RWPE1 (cell line): ENCODE measurements at regions of chr21 and their contacts with region 1.

Region 1: DNA sequence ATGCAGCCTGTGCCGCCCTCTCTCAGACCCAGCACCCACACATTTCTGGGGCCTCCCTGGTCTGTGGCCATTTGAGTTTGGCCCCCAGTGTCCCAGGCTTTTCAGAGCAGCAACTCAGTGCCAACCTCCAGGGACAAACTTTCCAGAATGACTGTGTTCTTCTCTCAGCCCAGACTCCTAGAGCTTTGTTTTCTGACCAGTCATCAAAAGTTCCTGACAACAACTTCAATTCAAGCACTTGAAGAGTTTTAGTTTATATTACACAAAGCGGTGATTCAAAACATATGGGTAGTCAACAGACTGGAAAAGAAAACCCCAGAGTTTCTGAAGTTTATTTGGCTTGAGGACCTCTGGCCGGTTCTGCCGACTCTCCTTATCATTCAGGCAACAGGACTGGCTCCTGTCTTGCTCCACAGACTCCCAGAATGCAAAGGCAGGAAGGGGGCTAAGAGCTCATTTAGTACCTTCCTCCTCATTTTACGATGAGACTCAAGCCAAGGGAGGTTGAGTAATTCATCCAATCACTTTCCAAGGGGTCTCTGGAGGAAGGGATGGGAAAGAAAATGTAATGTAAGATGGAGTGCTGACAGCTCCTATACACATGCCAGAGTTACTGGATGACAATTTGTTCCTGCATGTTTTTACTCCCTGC is 27.0 kb upstream of the TIAM1 start:
- DNase-seq: no peak
- H3K27ac ChIP-seq: no peak overlapping the region
- CTCF ChIP-seq: no peak

Region 2: GRCh38 chr21:31196724-31197123 is 174.3 kb before region 1 on chr21:
- CTCF ChIA-PET with region 1: interaction called, 10 read pairs
- POLR2A ChIA-PET with region 1: no interaction called
- DNase-seq: no peak
- H3K27ac ChIP-seq: no peak overlapping the region
- CTCF ChIP-seq: no peak

Region 3: GRCh38 chr21:31351439-31351838 is 19.6 kb before region 1 on chr21:
- CTCF ChIA-PET with region 1: no interaction called
- POLR2A ChIA-PET with region 1: no interaction called
- DNase-seq: peak; percentile 87
- H3K27ac ChIP-seq: peak overlapping the region; percentile 70
- CTCF ChIP-seq: no peak

Region 4: GRCh38 chr21:31599563-31599962 is 228.5 kb after region 1 on chr21:
- CTCF ChIA-PET with region 1: no interaction called
- POLR2A ChIA-PET with region 1: no interaction called
- DNase-seq: no peak
- H3K27ac ChIP-seq: no peak overlapping the region
- CTCF ChIP-seq: no peak